Mammary epithelial cell (primary cell): ENCODE measurements at regions of chr9 and their contacts with region 1.

Region 1: DNA sequence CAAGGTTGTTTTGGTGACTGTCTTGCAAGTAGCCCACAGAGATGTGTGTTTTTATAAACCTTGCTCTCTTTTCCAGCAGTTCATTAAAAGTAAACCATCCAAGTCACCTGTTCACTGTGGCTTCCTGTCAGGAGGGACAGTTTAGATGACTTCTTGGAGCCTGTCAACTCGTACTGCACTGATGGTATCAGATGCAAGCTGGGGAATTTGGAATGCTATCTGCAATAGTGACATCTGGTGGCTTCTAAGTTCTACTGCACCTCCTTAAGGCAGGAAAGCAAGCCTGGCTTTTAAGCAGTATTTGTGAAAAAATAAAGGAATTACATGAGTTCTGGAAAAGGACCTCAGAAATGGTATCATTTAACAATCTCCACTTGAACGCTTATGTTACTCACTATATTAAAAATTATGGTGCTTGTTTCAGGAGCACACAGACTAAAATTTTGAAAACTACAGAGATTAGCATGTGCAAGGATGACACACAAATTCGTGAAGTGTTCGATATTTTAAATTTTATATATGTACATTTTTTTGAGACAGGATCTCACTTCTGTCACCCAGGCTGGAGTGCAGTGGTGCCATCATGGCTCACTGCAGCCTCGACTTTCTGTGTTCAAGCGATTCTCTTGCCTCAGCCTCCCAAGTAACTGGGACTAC is 164.0 kb downstream of the TTC39B start:
- DNase-seq: no peak
- H3K4me3 ChIP-seq: no peak overlapping the region
- H3K27ac ChIP-seq: no peak overlapping the region
- H3K4me1 ChIP-seq: peaks cover 6% of the 10 kb centered on the region
- H3K27me3 ChIP-seq: no peaks in the 10 kb centered on the region
- CTCF ChIP-seq: peak; percentile 82 to 86

Region 2: DNA sequence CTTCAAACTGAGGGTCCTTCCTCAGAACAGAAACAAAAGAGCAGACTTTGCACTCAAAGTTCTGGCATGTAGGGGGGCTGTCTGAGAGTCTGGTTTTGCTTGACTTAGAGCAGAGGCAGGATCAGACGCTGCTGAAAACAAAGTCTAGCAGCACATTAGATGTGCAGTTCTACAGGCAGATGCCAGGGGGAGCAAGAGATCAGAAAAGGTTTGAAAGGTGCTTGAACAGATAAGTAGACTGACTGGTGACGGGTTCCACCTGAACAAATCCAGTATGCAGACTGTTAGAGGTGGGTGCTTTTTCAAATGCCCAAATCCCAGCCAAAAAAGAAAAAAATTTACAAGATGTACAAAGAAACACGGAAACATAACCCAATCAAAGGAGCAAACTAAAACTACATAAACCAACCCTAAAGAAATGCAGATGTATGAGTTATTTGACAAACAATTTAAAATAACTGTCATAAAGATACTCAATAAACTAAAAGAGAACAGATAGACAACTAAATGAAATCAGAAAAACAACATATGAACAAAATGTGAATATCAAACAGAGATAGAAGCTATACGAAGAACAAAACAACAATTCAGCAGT is 38.1 kb before region 1 on chr9:
- CTCF ChIA-PET with region 1: no interaction called
- dilution Hi-C with region 1: no loop called
- in situ Hi-C with region 1: no loop called
- intact Hi-C with region 1: loop called (anchors 2 kb)
- DNase-seq: peak; percentile 20
- H3K4me3 ChIP-seq: no peak overlapping the region
- H3K27ac ChIP-seq: no peak overlapping the region
- H3K4me1 ChIP-seq: no peaks in the 10 kb centered on the region
- H3K27me3 ChIP-seq: no peaks in the 10 kb centered on the region
- CTCF ChIP-seq: peak; percentile 69 to 86

Region 3: GRCh38 chr9:15349892-15350778 is 207.1 kb after region 1 on chr9:
- CTCF ChIA-PET with region 1: no interaction called
- dilution Hi-C with region 1: no loop called
- in situ Hi-C with region 1: no loop called
- intact Hi-C with region 1: no loop called
- DNase-seq: peak; percentile 57
- H3K4me3 ChIP-seq: no peak overlapping the region
- H3K27ac ChIP-seq: no peak overlapping the region
- H3K4me1 ChIP-seq: no peaks in the 10 kb centered on the region
- H3K27me3 ChIP-seq: no peaks in the 10 kb centered on the region
- CTCF ChIP-seq: no peak